Activated CD4-positive, alpha-beta T cell treated with anti-CD3 and anti-CD28 coated beads, Interleukin-2, amount 10 ng/mL, durations not matched to agents 24 days and 14 days (primary cell): ENCODE measurements at regions of chr12 and their contacts with region 1.

Region 1: GRCh38 chr12:50825372-50825838 is 17.3 kb upstream of the TMPRSS12 start:
- DNase-seq: no peak
- H3K4me3 Mint-ChIP-seq: no peak overlapping the region
- H3K27ac Mint-ChIP-seq: no peak overlapping the region
- H3K4me1 Mint-ChIP-seq: peaks cover 5% of the 10 kb centered on the region
- H3K27me3 Mint-ChIP-seq: no peaks in the 10 kb centered on the region

Region 2: DNA sequence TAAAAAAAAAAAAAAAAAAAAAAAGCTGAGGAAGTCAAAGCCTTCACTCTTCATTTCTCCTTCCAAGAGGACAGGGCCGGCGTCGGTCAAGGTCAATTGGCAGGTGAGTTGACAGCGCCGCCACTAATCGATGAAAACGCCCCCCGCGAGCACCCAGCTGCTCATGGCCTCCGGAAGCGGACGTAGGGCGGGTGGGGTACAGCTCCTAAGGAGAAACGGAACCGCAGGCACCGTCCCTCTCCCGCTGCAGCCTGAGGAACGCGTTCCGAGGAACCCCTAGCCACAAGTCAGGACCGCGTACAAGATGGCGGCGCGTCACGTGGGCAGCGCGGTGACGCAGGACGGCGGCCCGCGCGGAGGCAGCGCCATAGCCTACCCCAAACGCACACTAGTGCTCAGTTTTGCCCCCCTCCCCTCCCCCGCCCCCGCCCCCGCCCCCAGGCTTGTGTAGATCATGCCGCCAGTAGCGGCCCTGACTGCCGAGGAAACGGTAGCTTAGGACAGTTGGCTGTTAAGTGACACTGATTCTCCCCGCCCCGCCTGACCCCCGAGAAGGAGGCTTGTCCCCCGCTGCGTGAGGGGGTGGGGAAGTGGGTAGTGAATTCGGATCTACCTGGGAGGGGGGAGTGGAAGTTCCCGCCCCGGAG is 61.6 kb before region 1 on chr12 and contains the start of gene ATF1:
- intact Hi-C with region 1: loop called (anchors 2 kb)
- DNase-seq: peak; percentile 98
- H3K4me3 Mint-ChIP-seq: peak within 1 kb of the TSS; percentile 94
- H3K27ac Mint-ChIP-seq: peak within 1 kb of the TSS; percentile 99
- H3K4me1 Mint-ChIP-seq: peaks cover 31% of the 10 kb centered on the region
- H3K27me3 Mint-ChIP-seq: no peaks in the 10 kb centered on the region
- total RNA-seq, gene ATF1: 66.0 and 67.6 TPM in 2 replicates

Region 3: DNA sequence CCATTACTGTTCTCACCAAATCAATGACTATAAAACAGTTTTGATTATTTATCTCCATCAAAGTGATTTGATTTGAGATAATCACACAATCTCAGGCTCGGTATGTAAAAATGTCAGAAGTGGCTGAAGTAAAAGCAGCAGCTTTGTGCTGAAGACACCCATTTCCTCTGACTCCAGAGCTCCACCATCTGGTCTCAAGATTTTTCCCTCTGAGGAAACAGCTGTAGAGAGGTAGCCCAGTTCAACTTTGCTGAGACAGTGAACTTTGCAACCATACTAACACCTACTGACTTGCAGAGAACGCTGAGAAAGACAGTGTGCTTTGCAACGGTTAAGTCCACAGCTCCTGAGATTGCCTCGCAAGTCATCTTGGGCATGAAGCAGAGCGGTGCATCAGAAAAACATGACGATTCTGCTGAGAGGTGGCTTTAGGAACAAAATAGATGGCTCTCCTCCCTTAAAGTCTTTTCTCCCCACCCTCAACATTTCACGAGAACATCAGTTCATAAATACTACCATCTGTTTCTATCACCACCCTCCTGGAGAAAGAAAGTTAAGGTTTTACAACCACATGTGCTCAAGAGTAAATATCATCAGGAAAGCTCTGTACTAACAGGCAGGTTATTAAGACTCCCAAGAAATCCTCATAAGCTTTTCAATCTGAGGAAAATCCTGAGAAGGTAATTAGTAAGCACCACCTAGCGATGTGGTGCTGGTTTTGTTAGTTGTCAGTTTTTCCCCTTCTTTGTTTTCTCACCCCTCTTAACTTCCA is 161.7 kb after region 1 on chr12:
- intact Hi-C with region 1: loop called (anchors 1 kb)
- DNase-seq: peak; percentile 86
- H3K4me3 Mint-ChIP-seq: no peak overlapping the region
- H3K27ac Mint-ChIP-seq: peak overlapping the region; percentile 55
- H3K4me1 Mint-ChIP-seq: peaks cover 36% of the 10 kb centered on the region
- H3K27me3 Mint-ChIP-seq: no peaks in the 10 kb centered on the region

Region 4: DNA sequence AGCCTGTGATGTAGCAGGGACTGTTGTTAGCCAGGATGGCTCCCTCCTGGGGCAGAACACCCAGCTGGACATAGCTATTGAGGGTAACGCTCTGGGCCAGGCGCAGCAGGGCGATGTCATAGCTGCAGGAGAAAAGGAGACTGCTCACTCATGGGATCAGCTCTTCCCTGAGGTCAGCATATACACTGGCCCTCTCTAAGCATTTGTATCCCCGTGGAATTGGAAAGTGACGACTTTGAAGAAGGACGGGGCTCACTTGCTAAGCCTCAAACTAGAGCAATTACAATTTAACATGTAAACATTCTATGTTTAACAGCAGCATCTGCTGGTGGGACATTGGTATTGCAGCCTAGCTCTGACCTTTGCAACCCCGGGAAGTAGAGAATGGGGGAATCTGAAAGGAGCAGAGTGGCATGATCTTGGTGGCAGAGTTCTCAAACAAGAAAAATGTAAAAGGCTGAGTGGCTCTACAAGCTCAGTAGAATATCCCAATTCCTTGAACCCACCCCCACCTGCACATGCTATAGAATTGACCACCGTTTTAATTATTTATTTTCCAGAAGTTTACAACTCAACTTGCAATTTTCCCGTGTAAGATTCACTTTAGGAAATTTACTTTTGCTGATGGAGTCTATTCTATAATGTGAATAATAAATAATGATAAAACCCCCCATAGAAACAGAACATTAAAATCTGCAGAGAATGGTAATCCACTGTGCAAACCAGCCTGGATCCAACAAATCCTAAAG is 516.0 kb after region 1 on chr12:
- intact Hi-C with region 1: loop called (anchors 5 kb)
- DNase-seq: peak; percentile 93
- H3K4me3 Mint-ChIP-seq: peak overlapping the region; percentile 42
- H3K27ac Mint-ChIP-seq: peak overlapping the region; percentile 35
- H3K4me1 Mint-ChIP-seq: peaks cover 14% of the 10 kb centered on the region
- H3K27me3 Mint-ChIP-seq: peaks cover 5% of the 10 kb centered on the region